Activated CD8-positive, alpha-beta T cell treated with anti-CD3 and anti-CD28 coated beads for 36 hours (primary cell): ENCODE measurements at regions of chr20 and their contacts with region 1.

Region 1: GRCh38 chr20:44217342-44218092 is 6.9 kb upstream of the OSER1 start:
- DNase-seq: peak; percentile 77
- ATAC-seq: peak; percentile 55
- H3K4me3 Mint-ChIP-seq: peak overlapping the region; percentile 50
- H3K27ac Mint-ChIP-seq: peak overlapping the region; percentile 75
- H3K4me1 Mint-ChIP-seq: peaks cover 51% of the 10 kb centered on the region
- H3K27me3 Mint-ChIP-seq: no peaks in the 10 kb centered on the region
- CTCF ChIP-seq: peak; percentile 95

Region 2: DNA sequence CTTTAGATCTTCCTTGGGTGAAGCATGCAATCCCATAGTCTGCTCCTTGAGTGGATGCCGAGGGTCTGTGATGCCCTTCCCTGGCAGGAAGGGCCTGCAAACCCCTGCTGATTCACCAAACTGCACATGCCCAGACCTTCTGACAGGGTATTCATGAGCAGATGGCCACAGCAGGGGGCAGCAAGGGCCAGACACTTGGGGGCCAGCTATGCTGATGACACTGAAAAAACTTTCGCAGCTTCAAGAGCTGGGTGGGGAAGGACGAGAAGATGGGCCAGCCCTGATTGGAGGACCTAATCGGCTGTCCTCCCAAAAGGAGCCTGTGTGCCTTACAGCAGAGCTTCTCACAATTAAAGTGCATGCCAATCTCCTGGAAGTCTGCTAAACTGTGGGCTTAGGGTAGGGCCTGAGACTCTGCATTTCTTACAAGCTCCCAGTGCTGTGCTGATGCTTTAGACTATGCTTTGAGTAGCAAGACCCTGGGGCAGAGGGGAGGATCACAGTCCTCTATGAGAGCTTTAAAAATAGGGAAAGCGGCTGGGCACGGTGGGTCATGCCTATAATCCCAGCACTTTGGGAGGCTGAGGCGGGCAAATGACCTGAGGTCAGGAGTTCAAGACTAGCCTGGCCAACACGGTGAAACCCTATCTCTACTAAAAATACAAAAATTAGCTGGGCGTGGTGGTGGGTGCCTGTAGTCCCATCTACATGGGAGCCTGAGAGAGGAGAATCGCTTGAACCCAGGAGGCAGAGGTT is 14.4 kb after region 1 on chr20:
- CTCF ChIA-PET with region 1: interaction called, 22 read pairs
- POLR2A ChIA-PET with region 1: no interaction called
- intact Hi-C with region 1: no loop called
- DNase-seq: no peak
- ATAC-seq: peak; percentile 17
- H3K4me3 Mint-ChIP-seq: no peak overlapping the region
- H3K27ac Mint-ChIP-seq: no peak overlapping the region
- H3K4me1 Mint-ChIP-seq: no peaks in the 10 kb centered on the region
- H3K27me3 Mint-ChIP-seq: no peaks in the 10 kb centered on the region
- CTCF ChIP-seq: no peak

Region 3: GRCh38 chr20:44253528-44253927 is 36.0 kb after region 1 on chr20:
- CTCF ChIA-PET with region 1: no interaction called
- POLR2A ChIA-PET with region 1: no interaction called
- intact Hi-C with region 1: no loop called
- DNase-seq: no peak
- ATAC-seq: no peak
- H3K4me3 Mint-ChIP-seq: no peak overlapping the region
- H3K27ac Mint-ChIP-seq: no peak overlapping the region
- H3K4me1 Mint-ChIP-seq: no peaks in the 10 kb centered on the region
- H3K27me3 Mint-ChIP-seq: peaks cover 3% of the 10 kb centered on the region
- CTCF ChIP-seq: no peak

Region 4: DNA sequence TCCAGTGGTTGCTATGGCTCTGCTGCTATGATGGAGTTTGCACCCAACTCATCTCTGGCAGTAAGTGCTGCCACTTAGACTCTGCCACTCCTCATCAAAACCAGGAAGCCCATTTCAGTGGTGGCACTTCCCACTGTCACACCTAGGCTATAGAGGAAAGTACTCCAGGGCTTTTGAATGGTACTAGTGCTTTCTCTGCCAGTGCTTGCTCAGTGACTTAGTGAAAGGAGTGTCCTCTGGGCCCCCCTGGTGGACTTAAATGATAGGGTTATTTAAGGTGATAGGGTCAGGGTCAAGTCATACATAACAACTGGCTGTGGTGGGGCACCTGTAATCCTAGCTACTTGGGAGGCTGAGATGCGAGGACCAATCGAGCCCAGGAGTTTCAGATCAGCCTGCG is 70.7 kb after region 1 on chr20:
- CTCF ChIA-PET with region 1: interaction called, 10 read pairs
- POLR2A ChIA-PET with region 1: interaction called, 3 read pairs
- intact Hi-C with region 1: no loop called
- DNase-seq: peak; percentile 26
- ATAC-seq: no peak
- H3K4me3 Mint-ChIP-seq: no peak overlapping the region
- H3K27ac Mint-ChIP-seq: no peak overlapping the region
- H3K4me1 Mint-ChIP-seq: no peaks in the 10 kb centered on the region
- H3K27me3 Mint-ChIP-seq: no peaks in the 10 kb centered on the region
- CTCF ChIP-seq: no peak

Region 5: DNA sequence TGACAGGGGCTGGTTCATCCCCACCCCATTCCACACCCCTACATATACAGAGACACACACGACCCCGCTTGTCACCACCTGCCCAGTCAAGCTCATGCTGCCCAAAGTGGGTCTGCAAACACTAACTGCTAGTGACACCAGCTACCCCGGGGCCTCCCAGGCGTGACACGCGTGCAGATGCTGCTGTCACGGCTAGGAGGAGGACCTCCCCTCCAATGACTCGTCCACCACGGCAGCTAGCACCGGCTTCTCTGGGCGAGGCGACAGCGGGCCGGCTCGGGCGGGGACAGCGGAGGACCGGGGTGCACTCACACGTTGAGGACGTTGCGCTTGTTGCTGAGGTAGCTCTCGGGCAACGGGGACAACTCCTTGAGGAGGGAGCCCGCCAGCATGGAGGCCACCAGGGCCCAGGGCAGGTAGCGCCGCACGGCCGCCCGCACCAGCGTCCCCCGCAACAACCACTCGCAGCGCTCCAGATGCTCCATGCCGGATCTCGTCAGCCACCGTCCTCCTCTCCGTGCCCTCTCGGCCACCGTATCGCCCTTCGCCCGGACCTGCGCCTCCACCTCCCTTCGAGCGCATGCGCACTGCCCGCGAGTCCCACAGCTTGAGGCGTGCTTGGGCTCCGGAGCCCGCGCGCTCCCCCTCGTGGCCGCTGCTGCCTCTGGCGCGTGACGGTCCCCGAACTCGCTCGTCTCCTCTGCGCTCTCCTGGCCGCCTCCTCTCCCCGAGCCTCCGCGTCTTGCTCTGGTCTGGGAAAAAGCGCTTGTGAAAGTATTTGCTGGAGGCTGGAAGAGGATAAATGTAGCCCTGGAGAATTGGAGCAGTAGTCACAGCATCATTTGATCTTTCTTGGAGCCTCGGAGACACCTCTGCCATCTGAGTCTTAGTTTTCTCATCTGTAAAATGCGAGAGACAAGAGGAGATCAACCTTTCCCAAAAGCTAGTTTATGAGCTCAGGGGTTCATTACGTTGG is 93.4 kb after region 1 on chr20 and contains the start of gene FITM2:
- CTCF ChIA-PET with region 1: interaction called, 444 read pairs
- POLR2A ChIA-PET with region 1: interaction called, 25 read pairs
- intact Hi-C with region 1: loop called (anchors 1 kb)
- DNase-seq: peak; percentile 99
- ATAC-seq: peak; percentile 97
- H3K4me3 Mint-ChIP-seq: peak within 1 kb of the TSS; percentile 91
- H3K27ac Mint-ChIP-seq: peak within 1 kb of the TSS; percentile 85
- H3K4me1 Mint-ChIP-seq: peaks cover 16% of the 10 kb centered on the region
- H3K27me3 Mint-ChIP-seq: no peaks in the 10 kb centered on the region
- CTCF ChIP-seq: peak; percentile 81
- total RNA-seq, gene FITM2: 2.0 to 2.1 TPM

Region 6: DNA sequence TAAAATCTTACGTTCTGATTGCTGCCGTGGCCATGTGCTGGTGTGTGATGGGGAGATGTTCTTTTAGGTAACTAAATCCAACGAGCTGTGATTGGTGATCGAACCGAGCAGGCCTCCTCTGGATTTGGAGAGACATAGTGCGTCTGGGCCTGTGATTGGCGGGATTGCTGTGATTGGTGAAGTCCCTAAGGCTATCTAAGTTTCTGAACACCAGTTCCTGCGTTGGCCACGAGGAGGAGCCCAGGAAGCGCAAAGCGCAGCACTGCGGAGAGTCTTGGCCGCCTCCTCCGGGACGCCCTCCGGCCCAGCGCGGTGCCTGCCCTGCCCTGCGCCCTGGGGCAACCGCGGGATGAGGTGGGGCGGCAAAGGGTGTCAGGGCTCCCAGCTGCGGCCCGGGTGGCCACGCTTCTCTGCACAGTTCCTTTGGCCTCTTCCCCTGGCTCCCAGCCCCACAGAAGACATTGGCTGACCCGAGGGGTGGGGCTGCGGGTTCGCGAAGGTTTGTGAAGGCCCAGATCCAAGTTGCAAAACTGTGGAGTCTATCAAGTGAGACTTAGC is 171.0 kb after region 1 on chr20:
- CTCF ChIA-PET with region 1: interaction called, 102 read pairs
- POLR2A ChIA-PET with region 1: no interaction called
- intact Hi-C with region 1: loop called (anchors 5 kb)
- DNase-seq: peak; percentile 89
- ATAC-seq: peak; percentile 93
- H3K4me3 Mint-ChIP-seq: no peak overlapping the region
- H3K27ac Mint-ChIP-seq: no peak overlapping the region
- H3K4me1 Mint-ChIP-seq: peaks cover 2% of the 10 kb centered on the region
- H3K27me3 Mint-ChIP-seq: peaks cover 6% of the 10 kb centered on the region
- CTCF ChIP-seq: peak; percentile 91